CD4-positive, alpha-beta memory T cell (primary cell): ENCODE measurements at regions of chr2 and their contacts with region 1.

Region 1: GRCh38 chr2:23824777-23825212 is 102.1 kb downstream of the ATAD2B start:
- DNase-seq: peak in 4 of 5 donors; percentile 45 to 63 (median 54)
- H3K4me3 ChIP-seq: no peak overlapping the region
- H3K4me3 Mint-ChIP-seq: no peak overlapping the region
- H3K27ac ChIP-seq: no peak overlapping the region
- H3K27ac Mint-ChIP-seq: no peak overlapping the region
- H3K4me1 ChIP-seq: no peaks in the 10 kb centered on the region
- H3K4me1 Mint-ChIP-seq: peaks cover 0 to 4% (median 0%) of the 10 kb centered on the region in 4 donors
- H3K27me3 ChIP-seq: no peaks in the 10 kb centered on the region
- H3K27me3 Mint-ChIP-seq: no peaks in the 10 kb centered on the region

Region 2: GRCh38 chr2:23835988-23836387 is 11.2 kb after region 1 on chr2:
- CTCF ChIA-PET with region 1: interaction called, 22 read pairs
- POLR2A ChIA-PET with region 1: no interaction called
- intact Hi-C with region 1: no loop called
- DNase-seq: no peak
- H3K4me3 ChIP-seq: no peak overlapping the region
- H3K4me3 Mint-ChIP-seq: no peak overlapping the region
- H3K27ac ChIP-seq: no peak overlapping the region
- H3K27ac Mint-ChIP-seq: no peak overlapping the region
- H3K4me1 ChIP-seq: no peaks in the 10 kb centered on the region
- H3K4me1 Mint-ChIP-seq: peaks cover 0 to 9% (median 7%) of the 10 kb centered on the region in 4 donors
- H3K27me3 ChIP-seq: no peaks in the 10 kb centered on the region
- H3K27me3 Mint-ChIP-seq: no peaks in the 10 kb centered on the region

Region 3: GRCh38 chr2:23926750-23927571 is 102.2 kb after region 1 on chr2 and contains the start of gene ATAD2B:
- CTCF ChIA-PET with region 1: interaction called, 28 read pairs
- POLR2A ChIA-PET with region 1: interaction called, 3 read pairs
- intact Hi-C with region 1: loop called (anchors 2 kb)
- DNase-seq: peak; percentile 93 to 97 (median 96)
- H3K4me3 ChIP-seq: peak within 1 kb of the TSS; percentile 79 to 95
- H3K4me3 Mint-ChIP-seq: peak within 1 kb of the TSS; percentile 93 to 99 (median 98)
- H3K27ac ChIP-seq: peak within 1 kb of the TSS; percentile 97
- H3K27ac Mint-ChIP-seq: peak within 1 kb of the TSS; percentile 98 to 100 (median 100)
- H3K4me1 ChIP-seq: peaks cover 47% of the 10 kb centered on the region
- H3K4me1 Mint-ChIP-seq: peaks cover 35 to 63% (median 44%) of the 10 kb centered on the region in 4 donors
- H3K27me3 ChIP-seq: no peaks in the 10 kb centered on the region
- H3K27me3 Mint-ChIP-seq: no peaks in the 10 kb centered on the region
- total RNA-seq, gene ATAD2B: 38.7 to 44.4 TPM

Region 4: DNA sequence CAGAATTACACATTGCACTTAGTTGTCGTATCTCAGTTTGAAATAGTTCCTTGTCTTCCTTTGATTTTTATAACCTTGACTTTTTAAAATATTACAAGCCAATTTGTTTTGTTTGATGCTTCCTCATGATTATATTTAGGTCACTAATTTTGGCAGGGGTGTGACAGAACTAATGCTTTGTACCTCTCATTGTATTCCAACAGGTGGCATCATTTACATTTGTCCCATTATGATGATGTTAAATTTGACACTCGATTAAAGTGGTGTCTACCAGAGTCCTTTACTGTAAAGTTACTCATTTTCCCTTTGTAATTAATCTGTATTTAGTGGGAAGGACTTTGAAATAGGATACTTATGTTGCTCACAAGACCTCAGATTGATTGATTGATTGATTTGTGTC is 163.6 kb after region 1 on chr2:
- CTCF ChIA-PET with region 1: interaction called, 3 read pairs
- POLR2A ChIA-PET with region 1: no interaction called
- intact Hi-C with region 1: loop called (anchors 5 kb)
- DNase-seq: peak in 4 of 5 donors; percentile 16 to 27 (median 17)
- H3K4me3 ChIP-seq: no peak overlapping the region
- H3K4me3 Mint-ChIP-seq: no peak overlapping the region
- H3K27ac ChIP-seq: no peak overlapping the region
- H3K27ac Mint-ChIP-seq: peak overlapping the region in 1 of 7 donors; percentile 50
- H3K4me1 ChIP-seq: no peaks in the 10 kb centered on the region
- H3K4me1 Mint-ChIP-seq: peaks cover 0 to 3% (median 0%) of the 10 kb centered on the region in 4 donors
- H3K27me3 ChIP-seq: no peaks in the 10 kb centered on the region
- H3K27me3 Mint-ChIP-seq: no peaks in the 10 kb centered on the region

Region 5: DNA sequence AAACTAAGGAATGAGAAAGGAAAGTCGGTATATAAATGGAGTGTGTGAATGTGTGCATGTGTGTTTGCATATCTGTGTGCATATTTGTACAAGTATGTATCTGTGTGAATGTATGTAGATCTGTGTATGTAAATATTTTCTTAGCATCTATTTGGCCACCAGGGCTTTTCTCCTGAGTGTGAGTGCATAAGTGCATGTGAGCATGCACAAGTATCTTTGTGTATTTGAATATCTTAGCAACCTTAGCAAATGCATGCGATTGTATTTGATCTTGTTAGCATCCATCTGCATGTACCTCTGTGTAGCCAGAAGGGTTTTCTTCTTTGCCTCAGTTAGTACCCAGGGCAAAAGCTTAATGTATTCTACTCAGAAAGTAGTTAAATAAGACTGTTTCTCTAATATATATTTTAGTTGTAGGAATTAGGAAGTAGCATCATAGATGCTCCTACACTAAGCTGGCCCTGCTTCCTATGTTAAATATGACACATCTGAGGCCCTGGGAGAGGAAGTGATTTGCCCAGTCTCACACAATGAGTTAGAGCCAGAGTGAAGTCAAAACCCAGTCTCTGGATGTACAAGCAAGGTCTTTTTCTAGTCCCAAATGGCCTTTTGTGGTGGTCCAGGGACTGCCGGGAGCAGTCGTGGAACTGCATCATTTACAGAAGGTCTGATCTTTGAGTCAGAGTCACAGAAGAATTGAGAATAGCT is 233.9 kb after region 1 on chr2:
- CTCF ChIA-PET with region 1: interaction called, 3 read pairs
- POLR2A ChIA-PET with region 1: no interaction called
- intact Hi-C with region 1: loop called (anchors 1 kb)
- DNase-seq: no peak
- H3K4me3 ChIP-seq: no peak overlapping the region
- H3K4me3 Mint-ChIP-seq: no peak overlapping the region
- H3K27ac ChIP-seq: no peak overlapping the region
- H3K27ac Mint-ChIP-seq: peak overlapping the region in 1 of 7 donors; percentile 43
- H3K4me1 ChIP-seq: no peaks in the 10 kb centered on the region
- H3K4me1 Mint-ChIP-seq: no peaks in the 10 kb centered on the region
- H3K27me3 ChIP-seq: no peaks in the 10 kb centered on the region
- H3K27me3 Mint-ChIP-seq: peaks cover 0 to 3% of the 10 kb centered on the region in 2 donors

Region 6: DNA sequence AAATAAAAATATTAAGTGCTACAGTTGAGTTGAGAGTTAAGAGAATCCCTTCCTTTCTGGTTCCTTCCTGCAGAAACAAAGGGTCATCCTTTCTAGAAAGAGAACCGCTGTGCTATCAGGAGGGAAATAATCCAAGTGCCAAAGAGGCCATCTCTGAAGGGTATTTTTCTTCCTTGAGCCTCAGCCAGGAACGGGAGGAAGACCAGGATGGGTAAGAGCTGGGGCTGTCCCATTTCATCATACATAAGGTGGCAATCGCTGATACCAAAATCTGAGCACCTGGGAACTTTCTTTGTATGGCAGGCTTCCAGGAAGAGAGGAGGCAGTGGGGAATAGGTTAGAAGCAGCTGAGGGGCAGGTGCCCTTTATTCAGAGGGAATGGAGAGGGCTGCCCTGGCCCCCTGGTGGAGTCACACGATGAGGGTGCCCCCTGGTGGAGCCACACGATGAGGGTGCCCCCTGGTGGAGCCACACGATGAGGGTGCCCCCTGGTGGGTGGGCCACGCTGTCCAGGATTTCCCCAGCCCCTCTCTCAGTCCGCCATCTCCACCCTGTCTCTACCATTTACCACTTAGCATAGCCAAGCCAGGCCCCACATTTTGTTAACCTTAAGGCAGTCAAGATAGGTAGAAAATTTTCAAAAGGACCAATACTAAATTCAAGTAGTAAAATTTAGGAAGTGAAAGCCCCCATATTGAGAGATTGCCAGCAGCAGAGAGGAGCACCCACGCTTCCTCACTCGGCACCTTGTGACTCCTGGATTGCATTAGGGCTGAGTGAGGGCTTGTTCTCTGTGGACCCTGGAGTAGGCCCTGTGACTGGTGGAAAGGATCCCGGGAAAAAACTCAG is 339.6 kb after region 1 on chr2:
- CTCF ChIA-PET with region 1: interaction called, 26 read pairs
- POLR2A ChIA-PET with region 1: no interaction called
- intact Hi-C with region 1: loop called (anchors 2 kb)
- DNase-seq: peak in 3 of 5 donors; percentile 4 to 17 (median 10)
- H3K4me3 ChIP-seq: no peak overlapping the region
- H3K4me3 Mint-ChIP-seq: no peak overlapping the region
- H3K27ac ChIP-seq: no peak overlapping the region
- H3K27ac Mint-ChIP-seq: no peak overlapping the region
- H3K4me1 ChIP-seq: no peaks in the 10 kb centered on the region
- H3K4me1 Mint-ChIP-seq: no peaks in the 10 kb centered on the region
- H3K27me3 ChIP-seq: no peaks in the 10 kb centered on the region
- H3K27me3 Mint-ChIP-seq: peaks cover 0 to 2% of the 10 kb centered on the region in 2 donors

Region 7: GRCh38 chr2:24382363-24383073 is 557.7 kb after region 1 on chr2:
- CTCF ChIA-PET with region 1: interaction called, 3 read pairs
- POLR2A ChIA-PET with region 1: no interaction called
- intact Hi-C with region 1: loop called (anchors 10 kb)
- DNase-seq: peak in 4 of 5 donors; percentile 60 to 68 (median 64)
- H3K4me3 ChIP-seq: no peak overlapping the region
- H3K4me3 Mint-ChIP-seq: no peak overlapping the region
- H3K27ac ChIP-seq: no peak overlapping the region
- H3K27ac Mint-ChIP-seq: no peak overlapping the region
- H3K4me1 ChIP-seq: no peaks in the 10 kb centered on the region
- H3K4me1 Mint-ChIP-seq: peaks cover 0 to 2% (median 0%) of the 10 kb centered on the region in 4 donors
- H3K27me3 ChIP-seq: no peaks in the 10 kb centered on the region
- H3K27me3 Mint-ChIP-seq: peaks cover 0 to 2% of the 10 kb centered on the region in 2 donors